ENCODE measurements at regions of chr9 and their contacts with region 1.

Region 1: GRCh38 chr9:118083161-118083560 is 379.0 kb downstream of the TLR4 start:
- DNase-seq: no peak
- ATAC-seq: no peak
- H3K4me3 ChIP-seq: no peak overlapping the region
- H3K27ac ChIP-seq: no peak overlapping the region
- H3K4me1 ChIP-seq: no peaks in the 10 kb centered on the region
- H3K27me3 ChIP-seq: no peaks in the 10 kb centered on the region
- CTCF ChIP-seq: no peak
- POLR2A ChIP-seq: no peak

Region 2: DNA sequence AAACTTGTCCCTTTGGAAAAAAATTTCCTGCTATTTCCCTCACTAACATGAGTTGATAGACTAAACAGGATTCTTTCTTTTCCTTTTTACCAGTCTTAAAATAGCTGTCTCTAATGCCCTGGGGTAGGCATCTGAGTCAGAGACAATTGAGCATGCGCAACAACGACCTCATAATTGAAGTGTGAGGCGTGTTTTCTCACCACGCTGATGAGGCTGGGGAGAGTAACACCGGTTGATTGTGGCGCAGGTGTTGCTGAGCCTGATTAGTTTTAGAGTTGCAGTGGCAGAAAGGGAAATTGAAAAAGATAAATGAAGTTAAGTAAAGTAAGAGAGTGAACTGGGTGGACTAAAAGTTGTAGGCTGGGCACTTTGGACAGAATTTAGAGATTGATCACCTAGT is 165.3 kb before region 1 on chr9:
- intact Hi-C with region 1: loop called in 1 of 10 experiments (anchors 10 kb)
- DNase-seq: no peak
- ATAC-seq: no peak
- H3K4me3 ChIP-seq: no peak overlapping the region
- H3K27ac ChIP-seq: no peak overlapping the region
- H3K4me1 ChIP-seq: no peaks in the 10 kb centered on the region
- H3K27me3 ChIP-seq: no peaks in the 10 kb centered on the region
- CTCF ChIP-seq: no peak
- POLR2A ChIP-seq: no peak

Region 3: GRCh38 chr9:118038713-118039112 is 44.4 kb before region 1 on chr9:
- intact Hi-C with region 1: loop called in 1 of 10 experiments (anchors 5 kb)
- DNase-seq: no peak
- ATAC-seq: no peak
- H3K4me3 ChIP-seq: no peak overlapping the region
- H3K27ac ChIP-seq: no peak overlapping the region
- H3K4me1 ChIP-seq: no peaks in the 10 kb centered on the region
- H3K27me3 ChIP-seq: no peaks in the 10 kb centered on the region
- CTCF ChIP-seq: no peak
- POLR2A ChIP-seq: no peak

Measured in heart left ventricle (tissue), 16 donors.